Mammary epithelial cell (primary cell): ENCODE measurements at regions of chr19 and their contacts with region 1.

Region 1: GRCh38 chr19:47124937-47125668 is 5.5 kb upstream of the SAE1 start:
- DNase-seq: peak; percentile 55
- H3K4me3 ChIP-seq: no peak overlapping the region
- H3K27ac ChIP-seq: no peak overlapping the region
- H3K4me1 ChIP-seq: peaks cover 12% of the 10 kb centered on the region
- H3K27me3 ChIP-seq: no peaks in the 10 kb centered on the region
- CTCF ChIP-seq: peak; percentile 52 to 62

Region 2: DNA sequence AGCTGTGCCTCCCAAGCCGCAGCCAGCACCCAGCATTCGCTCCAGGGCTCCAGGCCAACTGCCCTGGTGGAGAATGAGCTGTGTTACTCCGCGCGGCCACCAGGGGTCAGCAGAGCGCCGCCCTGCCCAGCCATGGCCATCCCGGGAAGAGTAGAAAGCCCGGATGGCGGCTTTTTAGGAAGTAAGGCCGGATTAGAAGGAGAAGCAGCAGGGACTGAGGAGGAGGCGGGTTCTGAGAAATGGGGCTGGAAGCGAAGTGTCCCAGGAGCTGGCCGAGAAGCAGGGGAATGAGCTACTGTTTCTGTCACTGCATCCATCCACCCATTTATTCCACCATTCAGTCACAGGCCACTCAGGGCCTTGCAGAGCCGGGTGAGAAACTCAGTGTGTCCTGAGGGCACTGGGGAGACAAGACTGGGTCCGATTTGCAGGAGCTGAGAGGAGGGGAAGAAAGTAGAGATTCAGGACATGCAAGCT is 112.0 kb before region 1 on chr19:
- CTCF ChIA-PET with region 1: no interaction called
- dilution Hi-C with region 1: no loop called
- in situ Hi-C with region 1: loop called (anchors 10 kb)
- intact Hi-C with region 1: loop called (anchors 1 kb)
- DNase-seq: peak; percentile 78
- H3K4me3 ChIP-seq: no peak overlapping the region
- H3K27ac ChIP-seq: no peak overlapping the region
- H3K4me1 ChIP-seq: peaks cover 11% of the 10 kb centered on the region
- H3K27me3 ChIP-seq: no peaks in the 10 kb centered on the region
- CTCF ChIP-seq: peak; percentile 93 to 98

Region 3: GRCh38 chr19:47035127-47036096 is 89.7 kb before region 1 on chr19:
- CTCF ChIA-PET with region 1: no interaction called
- dilution Hi-C with region 1: no loop called
- in situ Hi-C with region 1: no loop called
- intact Hi-C with region 1: loop called (anchors 1 kb)
- DNase-seq: peak; percentile 90
- H3K4me3 ChIP-seq: peak overlapping the region; percentile 47 to 79 (median 53)
- H3K27ac ChIP-seq: peak overlapping the region; percentile 68
- H3K4me1 ChIP-seq: peaks cover 14% of the 10 kb centered on the region
- H3K27me3 ChIP-seq: no peaks in the 10 kb centered on the region
- CTCF ChIP-seq: peak; percentile 80 to 94

Region 4: GRCh38 chr19:47075179-47075810 is 49.8 kb before region 1 on chr19:
- CTCF ChIA-PET with region 1: interaction called, 31 read pairs
- dilution Hi-C with region 1: loop called (anchors 5 kb)
- in situ Hi-C with region 1: loop called (anchors 5 to 10 kb)
- intact Hi-C with region 1: loop called (anchors 1 kb)
- DNase-seq: no peak
- H3K4me3 ChIP-seq: no peak overlapping the region
- H3K27ac ChIP-seq: no peak overlapping the region
- H3K4me1 ChIP-seq: peaks cover 2% of the 10 kb centered on the region
- H3K27me3 ChIP-seq: no peaks in the 10 kb centered on the region
- CTCF ChIP-seq: no peak

Region 5: DNA sequence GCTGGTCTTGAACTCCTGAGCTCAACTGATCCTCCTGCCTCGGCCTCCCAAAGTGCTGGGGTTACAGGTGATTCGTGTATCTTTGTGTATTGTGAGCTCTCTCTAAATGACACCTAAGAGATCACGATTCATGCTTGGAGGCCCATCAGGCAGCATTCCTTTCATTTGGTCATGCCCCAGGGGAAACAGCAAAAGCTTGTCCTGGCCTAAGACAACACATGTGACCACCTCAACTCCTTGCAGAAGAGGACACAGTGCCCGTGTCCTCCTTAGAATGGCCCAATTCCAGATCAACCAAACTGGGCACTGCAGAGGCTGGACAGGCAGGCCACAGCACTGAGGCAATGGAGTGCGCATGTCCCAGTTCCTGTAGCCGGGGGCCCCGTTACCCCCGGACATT is 44.0 kb before region 1 on chr19:
- CTCF ChIA-PET with region 1: interaction called, 31 read pairs
- dilution Hi-C with region 1: loop called (anchors 5 kb)
- in situ Hi-C with region 1: loop called (anchors 5 to 10 kb)
- intact Hi-C with region 1: loop called (anchors 1 kb)
- DNase-seq: no peak
- H3K4me3 ChIP-seq: no peak overlapping the region
- H3K27ac ChIP-seq: no peak overlapping the region
- H3K4me1 ChIP-seq: peaks cover 2% of the 10 kb centered on the region
- H3K27me3 ChIP-seq: no peaks in the 10 kb centered on the region
- CTCF ChIP-seq: no peak

Region 6: GRCh38 chr19:47112997-47113849 is 11.9 kb before region 1 on chr19 and contains the start of gene ZC3H4:
- CTCF ChIA-PET with region 1: no interaction called
- dilution Hi-C with region 1: no loop called
- in situ Hi-C with region 1: no loop called
- intact Hi-C with region 1: loop called (anchors 1 kb)
- DNase-seq: peak; percentile 99
- H3K4me3 ChIP-seq: peak within 1 kb of the TSS; percentile 77 to 96 (median 81)
- H3K27ac ChIP-seq: peak within 1 kb of the TSS; percentile 99
- H3K4me1 ChIP-seq: peaks cover 20% of the 10 kb centered on the region
- H3K27me3 ChIP-seq: no peaks in the 10 kb centered on the region
- CTCF ChIP-seq: no peak
- total RNA-seq, gene ZC3H4: 13.8 to 57.8 TPM